Heart right ventricle (tissue), 16 donors: ENCODE measurements at regions of chr4 and their contacts with region 1.

Region 1: DNA sequence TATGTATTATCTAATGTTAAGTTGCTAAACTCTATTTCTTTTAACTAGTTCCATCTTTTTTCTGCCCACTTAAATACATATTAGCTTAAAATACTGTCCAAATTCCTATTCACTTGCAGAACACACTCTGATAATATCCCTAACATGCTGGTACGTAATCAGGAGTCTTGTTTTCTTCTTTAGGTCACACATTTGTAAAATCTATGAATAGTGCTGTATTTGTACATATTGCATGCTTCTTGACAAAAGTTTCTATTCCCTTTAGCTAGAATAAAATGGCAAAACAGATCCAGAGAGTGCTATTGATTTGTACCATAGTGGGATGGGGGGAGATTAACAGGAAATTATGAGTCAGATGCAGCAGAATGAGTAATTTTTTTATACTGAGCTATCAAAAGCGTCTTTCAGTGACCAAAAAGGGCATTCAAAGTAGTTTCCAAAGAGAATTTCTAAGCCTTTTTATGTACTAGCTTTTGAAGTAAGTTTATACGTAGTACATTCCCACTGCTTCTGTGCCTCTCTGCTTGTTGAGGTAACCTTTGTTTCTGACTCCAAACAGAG is 126.5 kb downstream of the PTPN13 start:
- DNase-seq: no peak
- ATAC-seq: no peak
- H3K4me3 ChIP-seq: no peak overlapping the region
- H3K27ac ChIP-seq: no peak overlapping the region
- H3K4me1 ChIP-seq: no peaks in the 10 kb centered on the region
- H3K27me3 ChIP-seq: no peaks in the 10 kb centered on the region
- CTCF ChIP-seq: no peak

Region 2: DNA sequence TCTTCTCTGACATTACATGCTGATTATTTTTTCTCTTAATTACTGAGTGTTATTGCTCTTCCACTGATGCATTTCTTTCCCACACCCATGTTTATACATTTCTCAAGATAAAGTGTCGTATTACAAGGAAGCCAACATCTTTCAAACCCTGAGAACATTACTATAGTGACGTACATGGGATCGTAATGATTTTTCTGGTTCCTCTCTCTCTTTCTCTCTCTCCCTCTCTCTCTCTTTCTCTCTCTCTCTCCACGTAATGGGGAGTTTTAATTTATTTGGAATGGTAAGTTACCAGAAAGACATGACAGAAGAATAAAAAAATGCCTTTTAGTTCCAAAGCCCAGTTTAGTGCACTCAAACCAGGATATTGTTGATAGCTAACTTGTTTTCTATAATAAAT is 320.4 kb before region 1 on chr4:
- intact Hi-C with region 1: no loop called
- DNase-seq: no peak
- ATAC-seq: no peak
- H3K4me3 ChIP-seq: no peak overlapping the region
- H3K27ac ChIP-seq: no peak overlapping the region
- H3K4me1 ChIP-seq: no peaks in the 10 kb centered on the region
- H3K27me3 ChIP-seq: no peaks in the 10 kb centered on the region
- CTCF ChIP-seq: no peak

Region 3: GRCh38 chr4:86704601-86705000 is 16.0 kb before region 1 on chr4:
- intact Hi-C with region 1: loop called in 1 of 10 experiments (anchors 1 kb)
- DNase-seq: no peak
- ATAC-seq: no peak
- H3K4me3 ChIP-seq: no peak overlapping the region
- H3K27ac ChIP-seq: no peak overlapping the region
- H3K4me1 ChIP-seq: no peaks in the 10 kb centered on the region
- H3K27me3 ChIP-seq: no peaks in the 10 kb centered on the region
- CTCF ChIP-seq: no peak